ENCODE measurements at regions of chrX and their contacts with region 1.

Region 1: DNA sequence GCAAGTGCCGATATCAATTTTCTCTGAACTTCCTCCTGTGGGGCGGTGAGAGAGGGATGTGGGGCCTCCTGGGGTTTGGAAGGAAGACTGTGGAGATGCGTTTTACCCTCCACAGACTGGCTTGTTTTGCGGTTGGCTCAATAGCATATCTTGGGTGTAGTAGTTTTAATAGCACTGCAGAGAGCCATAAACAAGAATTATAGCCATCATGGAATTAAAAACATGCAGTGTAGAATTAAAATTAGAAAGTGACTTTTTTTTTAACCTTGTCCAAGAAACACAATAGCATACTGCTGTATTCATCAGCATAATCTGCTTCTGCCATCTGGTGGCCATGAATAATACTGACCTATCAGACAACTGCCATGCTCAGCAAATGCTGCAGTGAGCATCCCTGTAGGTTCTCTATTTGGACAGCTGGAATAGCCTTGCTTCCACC is 47.3 kb upstream of the SCML1 start:
- DNase-seq: peak in 7 of 9 donors; percentile 10 to 35 (median 27)
- ATAC-seq: peak; percentile 73
- H3K4me3 ChIP-seq: no peak overlapping the region
- H3K4me3 Mint-ChIP-seq: no peak overlapping the region
- H3K27ac ChIP-seq: no peak overlapping the region
- H3K27ac Mint-ChIP-seq: peak overlapping the region in 1 of 9 donors; percentile 1
- H3K4me1 ChIP-seq: no peaks in the 10 kb centered on the region
- H3K4me1 Mint-ChIP-seq: peaks cover 0 to 7% (median 5%) of the 10 kb centered on the region in 7 donors
- H3K27me3 ChIP-seq: no peaks in the 10 kb centered on the region
- H3K27me3 Mint-ChIP-seq: no peaks in the 10 kb centered on the region

Region 2: GRCh38 chrX:17120816-17121215 is 569.2 kb before region 1 on chrX:
- CTCF ChIA-PET with region 1: no interaction called
- POLR2A ChIA-PET with region 1: no interaction called
- intact Hi-C with region 1: loop called in 1 of 2 experiments (anchors 5 kb)
- DNase-seq: no peak
- ATAC-seq: no peak
- H3K4me3 ChIP-seq: no peak overlapping the region
- H3K4me3 Mint-ChIP-seq: no peak overlapping the region
- H3K27ac ChIP-seq: no peak overlapping the region
- H3K27ac Mint-ChIP-seq: no peak overlapping the region
- H3K4me1 ChIP-seq: no peaks in the 10 kb centered on the region
- H3K4me1 Mint-ChIP-seq: peaks cover 0 to 2% (median 0%) of the 10 kb centered on the region in 7 donors
- H3K27me3 ChIP-seq: no peaks in the 10 kb centered on the region
- H3K27me3 Mint-ChIP-seq: no peaks in the 10 kb centered on the region

Region 3: DNA sequence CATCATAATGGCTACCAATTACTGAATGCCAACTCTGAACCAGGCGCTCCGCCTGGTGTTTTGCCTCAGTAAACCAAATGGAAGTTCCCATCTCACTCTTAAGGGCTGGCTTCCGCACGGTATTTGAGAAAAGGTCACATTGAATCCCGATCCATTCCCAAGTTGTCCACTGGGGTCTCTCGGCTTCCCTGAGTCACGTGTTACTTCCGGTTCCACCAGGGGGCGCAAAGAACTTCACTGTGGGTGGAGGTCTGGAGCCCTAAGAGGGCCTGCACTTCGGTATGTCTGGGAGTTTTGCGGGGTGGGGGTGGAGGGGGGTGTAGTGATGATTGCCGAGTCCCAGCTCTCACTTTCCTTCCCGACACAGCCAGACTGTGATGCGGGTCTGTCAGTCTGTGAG is 328.4 kb before region 1 on chrX:
- CTCF ChIA-PET with region 1: no interaction called
- POLR2A ChIA-PET with region 1: no interaction called
- intact Hi-C with region 1: loop called in 1 of 2 experiments (anchors 5 kb)
- DNase-seq: no peak
- ATAC-seq: no peak
- H3K4me3 ChIP-seq: no peak overlapping the region
- H3K4me3 Mint-ChIP-seq: no peak overlapping the region
- H3K27ac ChIP-seq: no peak overlapping the region
- H3K27ac Mint-ChIP-seq: no peak overlapping the region
- H3K4me1 ChIP-seq: no peaks in the 10 kb centered on the region
- H3K4me1 Mint-ChIP-seq: no peaks in the 10 kb centered on the region
- H3K27me3 ChIP-seq: no peaks in the 10 kb centered on the region
- H3K27me3 Mint-ChIP-seq: peaks cover 0 to 9% (median 4%) of the 10 kb centered on the region in 5 donors

Region 4: GRCh38 chrX:17535229-17535628 is 154.8 kb before region 1 on chrX:
- CTCF ChIA-PET with region 1: no interaction called
- POLR2A ChIA-PET with region 1: no interaction called
- intact Hi-C with region 1: loop called in 1 of 2 experiments (anchors 1 kb)
- DNase-seq: peak in 5 of 9 donors; percentile 3 to 34 (median 4)
- ATAC-seq: peak; percentile 52
- H3K4me3 ChIP-seq: no peak overlapping the region
- H3K4me3 Mint-ChIP-seq: no peak overlapping the region
- H3K27ac ChIP-seq: no peak overlapping the region
- H3K27ac Mint-ChIP-seq: no peak overlapping the region
- H3K4me1 ChIP-seq: no peaks in the 10 kb centered on the region
- H3K4me1 Mint-ChIP-seq: peaks cover 0 to 2% (median 0%) of the 10 kb centered on the region in 7 donors
- H3K27me3 ChIP-seq: no peaks in the 10 kb centered on the region
- H3K27me3 Mint-ChIP-seq: no peaks in the 10 kb centered on the region

Region 5: GRCh38 chrX:17590892-17591740 is 98.9 kb before region 1 on chrX:
- CTCF ChIA-PET with region 1: no interaction called
- POLR2A ChIA-PET with region 1: no interaction called
- intact Hi-C with region 1: loop called (anchors 1 to 5 kb)
- DNase-seq: peak in 3 of 9 donors; percentile 0 to 21 (median 12)
- ATAC-seq: peak; percentile 40
- H3K4me3 ChIP-seq: no peak overlapping the region
- H3K4me3 Mint-ChIP-seq: peak overlapping the region in 1 of 10 donors; percentile 3
- H3K27ac ChIP-seq: no peak overlapping the region
- H3K27ac Mint-ChIP-seq: no peak overlapping the region
- H3K4me1 ChIP-seq: no peaks in the 10 kb centered on the region
- H3K4me1 Mint-ChIP-seq: peaks cover 0 to 18% (median 2%) of the 10 kb centered on the region in 7 donors
- H3K27me3 ChIP-seq: no peaks in the 10 kb centered on the region
- H3K27me3 Mint-ChIP-seq: peaks cover 0 to 3% (median 0%) of the 10 kb centered on the region in 5 donors

Measured in naive thymus-derived CD4-positive, alpha-beta T cell (primary cell).